Activated CD4-positive, alpha-beta T cell treated with anti-CD3 and anti-CD28 coated beads, Interleukin-2, amount 10 ng/mL, durations not matched to agents 7 days and 5 days (primary cell): ENCODE measurements at regions of chr5 and their contacts with region 1.

Region 1: GRCh38 chr5:157130925-157131324 is 11.7 kb downstream of the MED7 start:
- DNase-seq: no peak
- H3K4me3 Mint-ChIP-seq: no peak overlapping the region
- H3K27ac Mint-ChIP-seq: no peak overlapping the region
- H3K4me1 Mint-ChIP-seq: peaks cover 37% of the 10 kb centered on the region
- H3K27me3 Mint-ChIP-seq: no peaks in the 10 kb centered on the region

Region 2: GRCh38 chr5:157116483-157116954 is 14.4 kb before region 1 on chr5:
- CTCF ChIA-PET with region 1: interaction called, 19 read pairs
- POLR2A ChIA-PET with region 1: no interaction called
- DNase-seq: no peak
- H3K4me3 Mint-ChIP-seq: no peak overlapping the region
- H3K27ac Mint-ChIP-seq: peak overlapping the region; percentile 7
- H3K4me1 Mint-ChIP-seq: peaks cover 41% of the 10 kb centered on the region
- H3K27me3 Mint-ChIP-seq: no peaks in the 10 kb centered on the region

Region 3: GRCh38 chr5:157142317-157143126 is 11.6 kb after region 1 on chr5 and contains the start of gene MED7:
- CTCF ChIA-PET with region 1: interaction called, 29 read pairs
- POLR2A ChIA-PET with region 1: no interaction called
- DNase-seq: peak; percentile 98
- H3K4me3 Mint-ChIP-seq: peak within 1 kb of the TSS; percentile 82
- H3K27ac Mint-ChIP-seq: peak within 1 kb of the TSS; percentile 98
- H3K4me1 Mint-ChIP-seq: peaks cover 40% of the 10 kb centered on the region
- H3K27me3 Mint-ChIP-seq: no peaks in the 10 kb centered on the region
- total RNA-seq, gene MED7: 12.1 to 13.2 TPM

Region 4: DNA sequence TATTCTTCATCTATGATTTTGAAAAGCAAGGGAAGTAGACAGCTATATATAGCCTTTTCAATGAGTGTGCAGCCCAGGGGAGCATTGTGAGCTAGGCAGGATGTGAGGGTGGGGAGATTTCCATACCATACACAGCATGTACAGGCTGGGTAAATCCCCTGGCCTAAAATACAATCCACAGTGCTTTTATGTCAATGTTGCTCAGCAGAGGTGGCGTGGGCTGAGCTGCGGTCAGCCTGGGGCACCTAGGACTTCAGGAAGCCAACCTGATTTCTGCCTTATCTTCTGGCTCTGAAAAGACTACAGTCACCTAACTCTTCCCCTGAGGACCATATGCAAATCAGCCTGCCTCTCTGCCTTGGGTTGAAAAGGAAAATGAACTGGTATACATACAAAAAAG is 41.5 kb after region 1 on chr5:
- CTCF ChIA-PET with region 1: no interaction called
- POLR2A ChIA-PET with region 1: no interaction called
- DNase-seq: peak; percentile 86
- H3K4me3 Mint-ChIP-seq: peak overlapping the region; percentile 71
- H3K27ac Mint-ChIP-seq: peak overlapping the region; percentile 94
- H3K4me1 Mint-ChIP-seq: peaks cover 82% of the 10 kb centered on the region
- H3K27me3 Mint-ChIP-seq: no peaks in the 10 kb centered on the region